Activated CD4-positive, alpha-beta T cell treated with anti-CD3 and anti-CD28 coated beads, Interleukin-2, amount 10 ng/mL, durations not matched to agents 24 days and 14 days (primary cell): ENCODE measurements at regions of chr10 and their contacts with region 1.

Region 1: DNA sequence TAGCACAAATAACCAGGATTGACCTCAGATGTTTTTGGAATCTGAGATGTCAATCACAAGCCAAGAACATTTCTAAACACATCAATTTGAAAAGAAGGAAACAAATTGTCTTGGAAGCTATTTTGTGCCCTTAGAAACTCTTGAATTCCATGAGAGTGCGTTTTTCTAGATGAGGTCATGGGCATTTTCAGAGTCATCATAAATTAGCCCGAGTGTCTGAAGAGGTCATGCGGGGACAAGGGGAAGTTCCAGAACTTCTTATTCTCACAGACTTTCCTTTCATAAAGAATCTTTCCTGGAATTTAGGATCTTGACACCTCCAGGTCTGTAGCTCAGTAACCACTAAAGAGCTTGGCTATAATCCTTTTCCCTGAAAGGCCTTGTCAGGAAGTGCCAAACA is 28.2 kb downstream of the IL2RA start:
- DNase-seq: peak; percentile 44
- H3K4me3 Mint-ChIP-seq: no peak overlapping the region
- H3K27ac Mint-ChIP-seq: peak overlapping the region; percentile 5
- H3K4me1 Mint-ChIP-seq: peaks cover 53% of the 10 kb centered on the region
- H3K27me3 Mint-ChIP-seq: no peaks in the 10 kb centered on the region

Region 2: GRCh38 chr10:6014241-6014761 is 19.7 kb before region 1 on chr10:
- intact Hi-C with region 1: loop called (anchors 2 kb)
- DNase-seq: peak; percentile 89
- H3K4me3 Mint-ChIP-seq: peak overlapping the region; percentile 59
- H3K27ac Mint-ChIP-seq: peak overlapping the region; percentile 81
- H3K4me1 Mint-ChIP-seq: peaks cover 51% of the 10 kb centered on the region
- H3K27me3 Mint-ChIP-seq: no peaks in the 10 kb centered on the region

Region 3: GRCh38 chr10:6045314-6045848 is 11.4 kb after region 1 on chr10:
- intact Hi-C with region 1: loop called (anchors 2 kb)
- DNase-seq: peak; percentile 82
- H3K4me3 Mint-ChIP-seq: peak overlapping the region; percentile 80
- H3K27ac Mint-ChIP-seq: peak overlapping the region; percentile 95
- H3K4me1 Mint-ChIP-seq: peaks cover 76% of the 10 kb centered on the region
- H3K27me3 Mint-ChIP-seq: no peaks in the 10 kb centered on the region

Region 4: GRCh38 chr10:6182454-6183098 is 148.6 kb after region 1 on chr10:
- intact Hi-C with region 1: no loop called
- DNase-seq: no peak
- H3K4me3 Mint-ChIP-seq: no peak overlapping the region
- H3K27ac Mint-ChIP-seq: peak overlapping the region; percentile 20
- H3K4me1 Mint-ChIP-seq: peaks cover 27% of the 10 kb centered on the region
- H3K27me3 Mint-ChIP-seq: no peaks in the 10 kb centered on the region

Region 5: GRCh38 chr10:6498771-6499170 is 464.8 kb after region 1 on chr10:
- intact Hi-C with region 1: no loop called
- DNase-seq: peak; percentile 89
- H3K4me3 Mint-ChIP-seq: peak overlapping the region; percentile 78
- H3K27ac Mint-ChIP-seq: peak overlapping the region; percentile 84
- H3K4me1 Mint-ChIP-seq: peaks cover 42% of the 10 kb centered on the region
- H3K27me3 Mint-ChIP-seq: no peaks in the 10 kb centered on the region